Heart right ventricle (tissue), 16 donors: ENCODE measurements at regions of chr9 and their contacts with region 1.

Region 1: DNA sequence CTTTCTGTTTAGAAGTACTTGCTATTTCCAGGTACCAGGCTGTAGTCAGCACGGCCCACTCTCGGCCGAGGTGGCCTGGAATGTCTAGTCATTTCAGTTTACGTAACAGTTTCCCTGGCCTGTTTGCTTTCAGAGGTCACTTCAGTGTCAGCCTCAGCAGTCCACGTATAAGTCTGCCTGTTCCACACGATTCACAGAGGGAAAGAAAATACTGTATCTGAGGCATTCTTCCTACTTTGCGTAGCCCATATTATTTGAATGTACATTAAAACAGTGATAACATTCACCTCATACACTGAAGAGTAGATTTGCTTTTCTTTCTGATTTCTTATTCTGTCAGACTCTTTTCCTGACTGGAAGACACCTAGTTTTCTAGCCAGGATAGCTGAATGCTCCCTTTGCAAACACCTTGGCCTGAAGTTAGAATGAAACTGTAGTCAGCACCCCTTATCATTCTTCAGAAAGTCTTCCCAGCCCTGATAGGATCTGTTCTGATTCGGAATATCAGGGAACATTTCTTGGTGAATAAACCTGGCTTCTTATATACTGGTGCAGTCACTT is 140.9 kb downstream of the AOPEP start:
- DNase-seq: peak; percentile 59 to 78
- ATAC-seq: peak; percentile 81 to 89 (median 86)
- H3K4me3 ChIP-seq: peak overlapping the region in 4 of 10 donors; percentile 1 to 27 (median 8)
- H3K27ac ChIP-seq: peak overlapping the region; percentile 78 to 97 (median 89)
- H3K4me1 ChIP-seq: peaks cover 10 to 85% (median 74%) of the 10 kb centered on the region in 9 donors
- H3K27me3 ChIP-seq: no peaks in the 10 kb centered on the region
- CTCF ChIP-seq: no peak

Region 2: GRCh38 chr9:94805585-94805984 is 61.8 kb before region 1 on chr9:
- intact Hi-C with region 1: loop called in 2 of 10 experiments (anchors 5 kb)
- DNase-seq: no peak
- ATAC-seq: peak in 5 of 8 donors; percentile 15 to 55 (median 30)
- H3K4me3 ChIP-seq: no peak overlapping the region
- H3K27ac ChIP-seq: peak overlapping the region in 7 of 10 donors; percentile 7 to 73 (median 50)
- H3K4me1 ChIP-seq: peaks cover 16 to 67% (median 44%) of the 10 kb centered on the region in 9 donors
- H3K27me3 ChIP-seq: no peaks in the 10 kb centered on the region
- CTCF ChIP-seq: no peak

Region 3: GRCh38 chr9:94952565-94953373 is 85.4 kb after region 1 on chr9:
- intact Hi-C with region 1: loop called in 2 of 10 experiments (anchors 5 kb)
- DNase-seq: peak in 1 of 2 donors; percentile 69
- ATAC-seq: peak; percentile 32 to 84 (median 70)
- H3K4me3 ChIP-seq: peak overlapping the region in 5 of 10 donors; percentile 6 to 20 (median 9)
- H3K27ac ChIP-seq: peak overlapping the region; percentile 33 to 92 (median 76)
- H3K4me1 ChIP-seq: peaks cover 7 to 59% (median 52%) of the 10 kb centered on the region in 9 donors
- H3K27me3 ChIP-seq: no peaks in the 10 kb centered on the region
- CTCF ChIP-seq: no peak

Region 4: GRCh38 chr9:94993064-94993833 is 125.9 kb after region 1 on chr9:
- intact Hi-C with region 1: loop called in 1 of 10 experiments (anchors 10 kb)
- DNase-seq: no peak
- ATAC-seq: no peak
- H3K4me3 ChIP-seq: no peak overlapping the region
- H3K27ac ChIP-seq: peak overlapping the region in 5 of 10 donors; percentile 1 to 36 (median 14)
- H3K4me1 ChIP-seq: peaks cover 10 to 41% (median 24%) of the 10 kb centered on the region in 9 donors
- H3K27me3 ChIP-seq: no peaks in the 10 kb centered on the region
- CTCF ChIP-seq: no peak